ENCODE measurements at regions of chr1 and their contacts with region 1.

Region 1: GRCh38 chr1:98053471-98054366 is 132.9 kb upstream of the DPYD start:
- DNase-seq: peak in 7 of 9 experiments; percentile 33 to 72 (median 52)
- ATAC-seq: peak; percentile 87
- H3K4me3 ChIP-seq: peak overlapping the region; percentile 49 to 56
- H3K4me3 Mint-ChIP-seq: peak overlapping the region; percentile 51
- H3K27ac ChIP-seq: no peak overlapping the region
- H3K27ac Mint-ChIP-seq: no peak overlapping the region
- H3K4me1 ChIP-seq: peaks cover 18% of the 10 kb centered on the region
- H3K4me1 Mint-ChIP-seq: peaks cover 22% of the 10 kb centered on the region
- H3K27me3 ChIP-seq: peaks cover 27 to 38% of the 10 kb centered on the region in 2 experiments
- H3K27me3 Mint-ChIP-seq: peaks cover 70% of the 10 kb centered on the region
- CTCF ChIP-seq: peak; percentile 83

Region 2: DNA sequence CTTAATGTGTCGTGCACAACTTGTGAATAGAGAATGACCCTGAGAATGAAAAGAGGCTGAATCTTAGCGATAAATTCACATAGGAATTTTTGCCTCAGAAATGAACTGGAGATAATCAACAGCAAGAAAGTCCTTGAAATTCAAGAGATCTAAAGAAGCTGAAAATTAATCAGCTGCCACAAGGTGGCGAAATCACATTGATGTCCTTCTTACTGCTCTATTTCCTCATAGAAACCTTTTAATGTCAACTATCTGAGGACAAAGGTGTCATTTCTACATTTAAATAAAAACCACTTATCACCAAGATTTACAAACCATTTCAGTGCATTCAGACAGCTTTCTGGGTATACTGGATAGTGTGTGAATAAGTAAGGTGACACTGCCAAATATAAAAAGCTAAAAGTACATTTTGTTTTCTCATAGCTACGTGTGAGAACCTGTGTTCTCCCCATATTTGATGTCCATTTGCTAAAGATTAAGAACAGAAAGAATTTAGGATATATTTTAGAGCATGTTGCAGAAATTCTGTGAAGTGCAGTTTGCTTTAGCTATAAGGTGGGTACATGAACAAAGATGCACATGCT is 1817.5 kb before region 1 on chr1:
- CTCF ChIA-PET with region 1: no interaction called
- POLR2A ChIA-PET with region 1: no interaction called
- intact Hi-C with region 1: loop called in 1 of 2 experiments (anchors 5 kb)
- DNase-seq: peak in 1 of 9 experiments; percentile 10
- ATAC-seq: no peak
- H3K4me3 ChIP-seq: no peak overlapping the region
- H3K4me3 Mint-ChIP-seq: no peak overlapping the region
- H3K27ac ChIP-seq: no peak overlapping the region
- H3K27ac Mint-ChIP-seq: no peak overlapping the region
- H3K4me1 ChIP-seq: no peaks in the 10 kb centered on the region
- H3K4me1 Mint-ChIP-seq: no peaks in the 10 kb centered on the region
- H3K27me3 ChIP-seq: no peaks in the 10 kb centered on the region
- H3K27me3 Mint-ChIP-seq: no peaks in the 10 kb centered on the region
- CTCF ChIP-seq: no peak

Region 3: GRCh38 chr1:97137862-97138514 is 915.7 kb before region 1 on chr1:
- CTCF ChIA-PET with region 1: interaction called, 8 read pairs
- POLR2A ChIA-PET with region 1: no interaction called
- intact Hi-C with region 1: loop called (anchors 1 to 2 kb)
- DNase-seq: peak in 2 of 9 experiments; percentile 35 to 41
- ATAC-seq: peak; percentile 57
- H3K4me3 ChIP-seq: no peak overlapping the region
- H3K4me3 Mint-ChIP-seq: no peak overlapping the region
- H3K27ac ChIP-seq: no peak overlapping the region
- H3K27ac Mint-ChIP-seq: no peak overlapping the region
- H3K4me1 ChIP-seq: no peaks in the 10 kb centered on the region
- H3K4me1 Mint-ChIP-seq: peaks cover 8% of the 10 kb centered on the region
- H3K27me3 ChIP-seq: no peaks in the 10 kb centered on the region
- H3K27me3 Mint-ChIP-seq: no peaks in the 10 kb centered on the region
- CTCF ChIP-seq: peak; percentile 23

Region 4: GRCh38 chr1:97192872-97193572 is 860.7 kb before region 1 on chr1:
- CTCF ChIA-PET with region 1: no interaction called
- POLR2A ChIA-PET with region 1: no interaction called
- intact Hi-C with region 1: loop called in 1 of 2 experiments (anchors 5 kb)
- DNase-seq: no peak
- ATAC-seq: no peak
- H3K4me3 ChIP-seq: no peak overlapping the region
- H3K4me3 Mint-ChIP-seq: no peak overlapping the region
- H3K27ac ChIP-seq: no peak overlapping the region
- H3K27ac Mint-ChIP-seq: no peak overlapping the region
- H3K4me1 ChIP-seq: no peaks in the 10 kb centered on the region
- H3K4me1 Mint-ChIP-seq: no peaks in the 10 kb centered on the region
- H3K27me3 ChIP-seq: no peaks in the 10 kb centered on the region
- H3K27me3 Mint-ChIP-seq: no peaks in the 10 kb centered on the region
- CTCF ChIP-seq: no peak

Region 5: DNA sequence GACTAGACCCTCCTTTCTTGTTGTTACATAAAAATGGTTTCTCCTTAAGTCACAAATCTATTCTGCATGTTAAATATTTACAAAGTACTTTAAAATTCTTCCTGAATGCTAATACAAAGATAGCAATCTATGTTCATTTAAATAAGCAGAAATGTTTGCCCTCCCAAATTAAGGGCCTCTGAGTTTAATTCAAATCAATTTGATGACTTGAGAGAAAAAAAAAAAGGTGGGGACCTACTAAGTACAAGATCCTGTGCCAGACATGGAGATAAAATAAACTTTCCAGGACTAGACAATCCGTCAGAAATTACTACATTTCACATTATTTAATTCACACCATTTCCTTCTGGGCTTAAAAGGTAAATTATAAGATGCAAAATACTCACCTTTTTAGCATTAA is 681.2 kb before region 1 on chr1:
- CTCF ChIA-PET with region 1: no interaction called
- POLR2A ChIA-PET with region 1: no interaction called
- intact Hi-C with region 1: loop called in 1 of 2 experiments (anchors 5 kb)
- DNase-seq: no peak
- ATAC-seq: no peak
- H3K4me3 ChIP-seq: no peak overlapping the region
- H3K4me3 Mint-ChIP-seq: no peak overlapping the region
- H3K27ac ChIP-seq: no peak overlapping the region
- H3K27ac Mint-ChIP-seq: no peak overlapping the region
- H3K4me1 ChIP-seq: no peaks in the 10 kb centered on the region
- H3K4me1 Mint-ChIP-seq: peaks cover 3% of the 10 kb centered on the region
- H3K27me3 ChIP-seq: no peaks in the 10 kb centered on the region
- H3K27me3 Mint-ChIP-seq: no peaks in the 10 kb centered on the region
- CTCF ChIP-seq: no peak

Region 6: DNA sequence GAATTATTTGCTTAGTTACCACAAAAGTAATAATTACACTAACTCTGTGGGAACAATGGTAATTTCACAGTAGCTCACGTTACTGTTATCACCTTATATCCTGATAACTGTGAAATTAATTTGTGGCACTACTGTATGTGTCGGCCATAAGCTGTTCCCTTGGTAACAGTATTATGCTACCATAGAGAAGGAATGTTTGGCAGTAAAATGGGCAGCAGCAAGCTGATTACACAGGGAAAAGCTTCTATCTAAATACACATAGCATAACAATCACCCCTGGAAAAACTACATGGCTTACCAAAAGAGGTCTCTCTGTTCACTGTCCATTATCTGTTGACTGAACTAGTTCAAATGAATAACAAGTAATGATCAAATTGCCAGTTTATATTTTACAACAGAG is 257.0 kb before region 1 on chr1:
- CTCF ChIA-PET with region 1: no interaction called
- POLR2A ChIA-PET with region 1: no interaction called
- intact Hi-C with region 1: loop called in 1 of 2 experiments (anchors 5 kb)
- DNase-seq: no peak
- ATAC-seq: no peak
- H3K4me3 ChIP-seq: no peak overlapping the region
- H3K4me3 Mint-ChIP-seq: no peak overlapping the region
- H3K27ac ChIP-seq: no peak overlapping the region
- H3K27ac Mint-ChIP-seq: no peak overlapping the region
- H3K4me1 ChIP-seq: no peaks in the 10 kb centered on the region
- H3K4me1 Mint-ChIP-seq: peaks cover 11% of the 10 kb centered on the region
- H3K27me3 ChIP-seq: no peaks in the 10 kb centered on the region
- H3K27me3 Mint-ChIP-seq: no peaks in the 10 kb centered on the region
- CTCF ChIP-seq: no peak

Region 7: DNA sequence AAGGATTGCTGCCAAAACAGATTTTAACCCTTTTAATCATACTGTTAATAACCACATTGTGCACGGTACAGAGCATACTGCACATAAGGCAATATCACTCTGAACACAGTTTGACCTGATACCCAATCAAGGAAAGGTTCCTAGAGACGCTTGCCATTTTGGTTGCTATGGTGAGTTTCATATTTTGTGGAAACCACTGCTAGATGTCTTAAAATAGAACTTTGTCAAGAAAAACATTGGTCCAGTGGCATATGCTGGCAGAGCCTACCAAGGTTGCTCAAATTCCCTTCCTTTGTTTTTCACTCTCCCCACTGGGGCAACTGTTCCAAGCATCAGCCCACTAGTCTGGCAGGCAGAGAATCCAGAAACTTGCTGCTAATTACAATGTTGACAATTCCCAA is 18.1 kb before region 1 on chr1:
- CTCF ChIA-PET with region 1: no interaction called
- POLR2A ChIA-PET with region 1: no interaction called
- intact Hi-C with region 1: no loop called
- DNase-seq: no peak
- ATAC-seq: no peak
- H3K4me3 ChIP-seq: no peak overlapping the region
- H3K4me3 Mint-ChIP-seq: no peak overlapping the region
- H3K27ac ChIP-seq: no peak overlapping the region
- H3K27ac Mint-ChIP-seq: no peak overlapping the region
- H3K4me1 ChIP-seq: no peaks in the 10 kb centered on the region
- H3K4me1 Mint-ChIP-seq: no peaks in the 10 kb centered on the region
- H3K27me3 ChIP-seq: no peaks in the 10 kb centered on the region
- H3K27me3 Mint-ChIP-seq: peaks cover 5% of the 10 kb centered on the region
- CTCF ChIP-seq: no peak

Region 8: GRCh38 chr1:99331636-99332035 is 1277.9 kb after region 1 on chr1:
- CTCF ChIA-PET with region 1: no interaction called
- POLR2A ChIA-PET with region 1: no interaction called
- intact Hi-C with region 1: no loop called
- DNase-seq: no peak
- ATAC-seq: no peak
- H3K4me3 ChIP-seq: no peak overlapping the region
- H3K4me3 Mint-ChIP-seq: no peak overlapping the region
- H3K27ac ChIP-seq: no peak overlapping the region
- H3K27ac Mint-ChIP-seq: no peak overlapping the region
- H3K4me1 ChIP-seq: no peaks in the 10 kb centered on the region
- H3K4me1 Mint-ChIP-seq: no peaks in the 10 kb centered on the region
- H3K27me3 ChIP-seq: no peaks in the 10 kb centered on the region
- H3K27me3 Mint-ChIP-seq: no peaks in the 10 kb centered on the region
- CTCF ChIP-seq: no peak